ENCODE measurements at regions of chr5 and their contacts with region 1.

Region 1: DNA sequence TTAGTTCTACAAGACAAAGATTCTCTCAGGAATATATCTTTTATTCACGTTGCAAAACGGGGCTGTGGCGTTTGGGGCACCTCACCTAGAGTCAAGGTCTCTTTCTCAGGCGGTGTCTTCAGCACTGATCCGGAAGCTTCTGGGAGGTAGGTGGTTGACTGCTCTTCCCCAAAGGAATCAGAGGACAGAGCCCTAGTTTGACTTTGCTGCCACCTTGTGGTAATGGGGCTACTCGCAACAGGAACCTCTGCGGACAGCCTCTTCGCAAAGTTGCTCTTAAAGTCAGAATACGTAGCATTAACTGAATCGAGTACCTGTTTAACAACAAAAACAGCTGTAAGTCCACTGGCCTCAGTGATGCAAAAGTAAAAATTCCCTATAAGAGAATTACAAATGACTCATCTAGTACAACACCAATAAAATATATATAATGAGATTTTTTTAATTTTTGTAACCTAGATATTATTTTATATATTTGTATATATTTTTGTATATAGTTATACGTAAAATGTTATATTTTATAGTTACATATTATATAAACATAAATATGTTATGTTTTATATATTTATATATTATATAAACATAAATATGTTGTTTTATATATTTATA is 13.3 kb upstream of the GPX8 start:
- DNase-seq: peak; percentile 74
- ATAC-seq: peak; percentile 82
- H3K4me3 ChIP-seq: no peak overlapping the region
- H3K4me3 Mint-ChIP-seq: no peak overlapping the region
- H3K27ac ChIP-seq: no peak overlapping the region
- H3K27ac Mint-ChIP-seq: no peak overlapping the region
- H3K4me1 ChIP-seq: peaks cover 4% of the 10 kb centered on the region in 2 donors
- H3K4me1 Mint-ChIP-seq: peaks cover 2% of the 10 kb centered on the region
- H3K27me3 ChIP-seq: peaks cover 0 to 2% (median 0%) of the 10 kb centered on the region in 4 experiments
- H3K27me3 Mint-ChIP-seq: peaks cover 16% of the 10 kb centered on the region
- CTCF ChIP-seq: peak; percentile 97

Region 2: DNA sequence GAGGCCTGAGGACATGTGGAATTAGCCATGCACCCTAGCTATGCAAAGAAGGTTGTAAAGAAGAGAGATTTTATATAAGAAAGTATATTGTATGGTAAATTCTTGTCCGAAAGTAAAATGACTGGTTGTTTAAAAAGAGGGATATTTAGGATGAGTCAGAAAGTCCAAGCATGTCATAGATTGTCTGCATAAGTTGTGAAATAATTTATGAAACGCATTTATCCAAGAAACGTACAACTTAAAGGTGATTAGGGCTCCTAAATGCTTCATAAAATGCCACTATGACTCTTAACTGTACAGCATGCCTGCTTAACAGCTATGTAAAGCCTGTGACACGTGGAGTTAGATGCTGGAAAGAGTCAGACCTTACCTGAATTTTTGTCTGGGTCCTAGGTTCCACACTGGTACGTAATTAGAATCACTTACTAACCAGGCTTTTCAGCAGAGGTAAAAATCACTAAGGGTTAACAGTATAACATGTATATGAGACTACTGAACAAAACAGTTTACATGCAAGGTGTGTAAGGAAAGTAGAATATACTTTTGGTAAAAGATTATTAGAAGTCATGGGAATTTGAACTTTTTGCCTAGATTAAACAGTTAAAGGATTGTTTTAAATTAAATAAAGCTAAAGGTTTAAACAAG is 799.3 kb before region 1 on chr5:
- CTCF ChIA-PET with region 1: no interaction called
- POLR2A ChIA-PET with region 1: no interaction called
- intact Hi-C with region 1: no loop called
- DNase-seq: no peak
- ATAC-seq: no peak
- H3K4me3 ChIP-seq: no peak overlapping the region
- H3K4me3 Mint-ChIP-seq: no peak overlapping the region
- H3K27ac ChIP-seq: no peak overlapping the region
- H3K27ac Mint-ChIP-seq: no peak overlapping the region
- H3K4me1 ChIP-seq: no peaks in the 10 kb centered on the region
- H3K4me1 Mint-ChIP-seq: no peaks in the 10 kb centered on the region
- H3K27me3 ChIP-seq: no peaks in the 10 kb centered on the region
- H3K27me3 Mint-ChIP-seq: no peaks in the 10 kb centered on the region
- CTCF ChIP-seq: no peak

Region 3: DNA sequence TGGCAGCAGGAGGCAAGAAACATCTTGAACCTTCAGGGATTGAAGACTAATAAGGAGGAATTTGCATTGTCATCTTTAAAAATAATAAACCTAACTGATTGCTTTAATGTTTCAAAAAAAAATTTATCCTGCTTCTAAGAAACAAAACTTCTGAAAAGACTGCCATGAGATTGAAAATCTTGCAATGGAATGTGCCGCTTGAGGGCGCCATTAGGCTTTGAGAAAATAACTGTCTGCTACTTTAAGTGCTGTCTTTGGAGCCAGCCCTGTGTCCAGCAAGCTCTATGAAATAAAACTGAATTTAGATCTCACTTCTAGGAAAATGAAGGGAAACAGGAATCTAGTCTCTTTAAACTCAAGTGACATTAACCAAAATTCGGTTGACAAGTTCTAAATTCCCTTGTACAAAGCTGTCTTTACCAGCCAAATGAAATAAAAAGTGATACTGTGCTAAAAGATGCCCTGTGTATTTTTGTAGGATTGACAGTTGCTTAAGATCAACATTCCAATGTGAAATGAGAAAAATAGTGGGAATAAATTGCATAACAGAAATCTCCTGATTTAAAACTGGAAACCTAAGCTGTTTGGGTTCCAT is 240.6 kb before region 1 on chr5:
- CTCF ChIA-PET with region 1: no interaction called
- POLR2A ChIA-PET with region 1: no interaction called
- intact Hi-C with region 1: loop called (anchors 1 kb)
- DNase-seq: peak; percentile 17
- ATAC-seq: no peak
- H3K4me3 ChIP-seq: no peak overlapping the region
- H3K4me3 Mint-ChIP-seq: no peak overlapping the region
- H3K27ac ChIP-seq: no peak overlapping the region
- H3K27ac Mint-ChIP-seq: no peak overlapping the region
- H3K4me1 ChIP-seq: peaks cover 7 to 10% of the 10 kb centered on the region in 2 donors
- H3K4me1 Mint-ChIP-seq: peaks cover 10% of the 10 kb centered on the region
- H3K27me3 ChIP-seq: peaks cover 0 to 37% (median 9%) of the 10 kb centered on the region in 4 experiments
- H3K27me3 Mint-ChIP-seq: peaks cover 69% of the 10 kb centered on the region
- CTCF ChIP-seq: peak; percentile 56

Region 4: DNA sequence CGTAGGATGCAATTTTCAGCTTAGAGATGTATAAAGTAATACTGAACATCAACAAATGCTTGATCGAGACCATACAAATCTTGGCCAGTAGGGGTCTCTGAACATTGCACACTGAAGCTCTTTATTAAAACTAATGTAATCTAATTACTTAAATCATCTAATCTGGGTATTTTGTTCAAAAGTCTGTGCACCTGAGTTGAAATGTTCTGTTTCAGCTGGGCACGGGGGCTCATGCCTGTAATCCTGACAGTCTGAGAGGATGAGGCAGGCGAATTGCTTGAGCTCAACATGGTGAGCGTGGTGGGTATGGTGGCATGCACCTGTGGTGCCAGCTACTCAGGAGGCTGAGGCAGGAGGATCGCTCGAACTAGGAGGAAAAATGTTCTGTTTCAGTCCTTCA is 202.3 kb before region 1 on chr5:
- CTCF ChIA-PET with region 1: interaction called, 12 read pairs
- POLR2A ChIA-PET with region 1: no interaction called
- intact Hi-C with region 1: no loop called
- DNase-seq: peak; percentile 10
- ATAC-seq: no peak
- H3K4me3 ChIP-seq: no peak overlapping the region
- H3K4me3 Mint-ChIP-seq: no peak overlapping the region
- H3K27ac ChIP-seq: no peak overlapping the region
- H3K27ac Mint-ChIP-seq: no peak overlapping the region
- H3K4me1 ChIP-seq: no peaks in the 10 kb centered on the region
- H3K4me1 Mint-ChIP-seq: no peaks in the 10 kb centered on the region
- H3K27me3 ChIP-seq: peaks cover 0 to 6% (median 0%) of the 10 kb centered on the region in 4 experiments
- H3K27me3 Mint-ChIP-seq: peaks cover 19% of the 10 kb centered on the region
- CTCF ChIP-seq: peak; percentile 65

Measured in B cell (primary cell).